ENCODE measurements at regions of chr4 and their contacts with region 1.

Region 1: GRCh38 chr4:78775303-78776030 is 683 bp upstream of the BMP2K start:
- DNase-seq: peak; percentile 93
- ATAC-seq: peak; percentile 94

Region 2: GRCh38 chr4:78612398-78613178 is 162.9 kb before region 1 on chr4:
- intact Hi-C with region 1: loop called (anchors 5 kb)
- DNase-seq: no peak
- ATAC-seq: peak; percentile 85

Region 3: DNA sequence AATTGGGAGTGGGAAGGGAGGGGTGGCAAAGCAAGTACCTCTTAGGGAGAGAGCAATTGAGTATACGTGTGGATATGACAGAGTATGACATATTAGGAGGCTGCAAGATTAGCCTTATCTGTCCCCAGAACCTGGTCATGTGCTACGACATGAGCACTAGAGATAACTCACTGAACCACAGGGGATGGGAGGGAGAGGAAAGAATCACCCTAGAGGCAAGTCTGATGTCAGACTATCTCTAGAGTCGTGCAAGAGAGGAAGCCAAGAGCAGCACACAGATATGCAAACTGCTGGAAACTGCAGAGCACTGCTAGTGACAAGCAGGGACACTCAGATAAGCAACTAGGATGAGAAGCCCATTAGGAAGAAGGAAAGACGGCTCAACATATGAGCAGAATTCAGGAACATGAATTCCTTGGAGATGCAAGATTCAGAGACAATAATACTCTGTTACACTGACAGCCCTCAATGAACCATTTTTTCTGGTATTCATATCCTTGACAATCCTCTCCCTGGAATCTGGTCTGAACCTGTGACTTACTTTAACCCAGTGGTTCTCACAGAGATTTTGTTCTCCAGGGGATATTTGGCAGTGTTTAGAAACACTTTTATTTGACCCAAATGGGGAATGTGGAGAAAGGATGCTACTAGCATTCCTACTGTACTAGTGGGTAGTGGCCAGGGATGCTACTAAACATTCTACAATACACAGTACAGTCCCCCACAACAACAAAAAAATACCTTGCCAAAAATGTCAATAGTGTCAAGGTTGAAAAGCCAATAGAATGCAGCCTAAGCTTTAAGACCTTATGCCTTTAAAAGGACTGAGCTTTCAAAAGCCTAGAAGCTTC is 83.3 kb before region 1 on chr4:
- intact Hi-C with region 1: loop called (anchors 10 kb)
- DNase-seq: no peak
- ATAC-seq: peak; percentile 88

Region 4: DNA sequence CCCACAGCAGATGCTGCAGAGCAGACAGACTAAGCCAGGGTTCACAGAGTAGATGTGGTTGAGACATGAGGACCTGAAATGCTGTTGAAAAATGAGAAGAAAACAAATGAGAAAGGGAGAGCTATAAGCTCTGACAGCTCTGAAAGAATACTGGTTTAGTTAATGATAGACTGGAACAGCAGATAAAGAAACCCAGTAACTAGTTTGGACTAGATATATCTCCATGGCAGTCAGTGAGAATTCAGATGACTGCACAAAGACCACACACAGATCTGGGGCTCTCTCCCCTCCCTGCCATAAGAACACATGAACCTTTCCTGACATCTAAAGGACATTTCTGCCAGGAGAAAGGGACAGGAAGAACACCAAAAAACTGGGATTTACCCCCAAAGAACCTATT is 542.2 kb after region 1 on chr4:
- intact Hi-C with region 1: no loop called
- DNase-seq: no peak
- ATAC-seq: no peak